Activated CD8-positive, alpha-beta T cell treated with anti-CD3 and anti-CD28 coated beads, Interleukin-2, amount 10 ng/mL, durations not matched to agents 7 days and 5 days (primary cell): ENCODE measurements at regions of chr19 and their contacts with region 1.

Region 1: DNA sequence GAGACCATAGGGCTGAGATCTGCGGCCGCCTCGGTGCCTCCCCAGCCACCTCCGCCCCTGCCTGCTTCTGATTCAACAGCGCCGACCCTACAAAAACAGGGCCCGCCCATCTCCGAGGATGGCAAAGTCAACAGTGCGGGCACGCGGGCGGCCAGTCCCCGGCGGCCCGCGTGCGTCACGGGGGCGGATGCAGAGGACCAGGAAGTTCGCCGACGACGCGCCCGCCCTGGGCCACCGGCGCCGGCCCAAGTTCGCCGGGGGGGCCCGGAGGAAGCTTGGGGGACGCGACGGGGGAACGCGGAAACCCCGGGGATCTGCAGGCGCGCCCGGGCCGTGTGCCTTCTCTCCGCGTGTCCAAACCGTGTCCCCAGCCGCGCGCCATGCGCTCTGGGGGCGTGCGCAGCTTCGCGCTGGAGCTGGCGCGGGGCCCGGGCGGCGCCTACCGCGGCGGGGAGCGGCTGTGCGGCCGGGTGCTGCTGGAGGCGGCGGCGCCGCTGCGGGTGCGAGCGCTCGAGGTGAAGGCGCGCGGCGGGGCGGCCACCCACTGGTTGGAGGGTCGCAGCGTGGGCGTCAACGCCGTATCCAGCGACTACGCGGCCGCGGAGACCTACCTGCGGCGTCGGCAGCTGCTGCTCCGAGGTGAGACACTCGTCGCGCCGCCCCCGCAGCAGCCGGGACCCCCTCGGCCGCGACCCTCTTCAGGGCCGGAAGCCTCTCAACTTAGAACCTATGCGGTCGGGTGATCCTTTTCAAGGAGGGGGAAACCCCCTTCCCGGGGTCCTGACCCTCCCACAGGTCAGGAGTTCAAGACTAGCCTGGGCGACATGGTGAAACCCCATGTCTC is 6.8 kb upstream of the ARRDC2 start:
- DNase-seq: peak; percentile 94
- ATAC-seq: peak; percentile 84
- H3K4me3 Mint-ChIP-seq: peak overlapping the region; percentile 92
- H3K27ac Mint-ChIP-seq: peak overlapping the region; percentile 100
- H3K4me1 Mint-ChIP-seq: peaks cover 31% of the 10 kb centered on the region
- H3K27me3 Mint-ChIP-seq: no peaks in the 10 kb centered on the region

Region 2: GRCh38 chr19:17915951-17916593 is 85.1 kb before region 1 on chr19:
- CTCF ChIA-PET with region 1: no interaction called
- POLR2A ChIA-PET with region 1: no interaction called
- DNase-seq: no peak
- ATAC-seq: no peak
- H3K4me3 Mint-ChIP-seq: no peak overlapping the region
- H3K27ac Mint-ChIP-seq: no peak overlapping the region
- H3K4me1 Mint-ChIP-seq: no peaks in the 10 kb centered on the region
- H3K27me3 Mint-ChIP-seq: no peaks in the 10 kb centered on the region

Region 3: GRCh38 chr19:17938092-17938845 is 62.9 kb before region 1 on chr19:
- CTCF ChIA-PET with region 1: interaction called, 141 read pairs
- POLR2A ChIA-PET with region 1: interaction called, 7 read pairs
- DNase-seq: peak; percentile 88
- ATAC-seq: peak; percentile 93
- H3K4me3 Mint-ChIP-seq: no peak overlapping the region
- H3K27ac Mint-ChIP-seq: no peak overlapping the region
- H3K4me1 Mint-ChIP-seq: peaks cover 11% of the 10 kb centered on the region
- H3K27me3 Mint-ChIP-seq: no peaks in the 10 kb centered on the region

Region 4: DNA sequence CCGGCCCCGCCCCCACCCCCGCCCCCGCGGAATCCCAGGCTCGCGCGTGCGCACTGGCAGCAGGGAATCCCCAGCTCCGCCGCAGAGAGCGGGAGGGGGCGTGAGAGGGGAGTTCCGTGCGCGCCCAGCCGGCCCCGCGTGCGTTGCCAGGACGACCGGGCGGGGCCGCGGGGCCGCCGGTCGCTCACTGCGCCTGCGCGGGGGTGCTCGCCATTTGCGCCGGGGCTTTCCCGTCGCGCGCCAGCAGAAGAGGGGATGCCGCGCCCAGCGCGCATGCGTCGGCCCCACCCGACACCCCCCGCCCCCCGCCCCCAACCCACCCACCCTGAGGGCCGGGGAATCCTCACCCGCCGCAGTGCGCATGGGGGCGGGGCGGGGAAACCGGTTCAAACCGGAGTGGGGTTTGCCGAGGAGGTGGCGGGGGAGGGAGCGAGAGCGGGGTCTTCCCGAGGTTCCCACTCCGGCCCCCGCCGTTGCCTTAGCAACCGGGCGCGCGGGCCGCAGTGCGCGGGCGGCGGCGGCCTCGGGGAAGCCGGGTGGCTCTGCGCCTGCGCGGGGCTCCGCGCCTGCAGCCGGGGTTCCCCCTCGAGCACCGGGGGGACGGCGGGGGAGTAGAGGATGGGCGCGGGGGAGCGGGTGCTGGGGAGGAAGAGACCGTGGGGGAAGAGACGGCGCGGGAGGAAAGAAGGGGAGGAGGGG is 53.2 kb before region 1 on chr19:
- CTCF ChIA-PET with region 1: interaction called, 55 read pairs
- POLR2A ChIA-PET with region 1: no interaction called
- DNase-seq: peak; percentile 95
- ATAC-seq: peak; percentile 70
- H3K4me3 Mint-ChIP-seq: peak overlapping the region; percentile 70
- H3K27ac Mint-ChIP-seq: no peak overlapping the region
- H3K4me1 Mint-ChIP-seq: peaks cover 41% of the 10 kb centered on the region
- H3K27me3 Mint-ChIP-seq: peaks cover 36% of the 10 kb centered on the region